Mammary epithelial cell (primary cell): ENCODE measurements at regions of chr7 and their contacts with region 1.

Region 1: GRCh38 chr7:41940760-41941343 is 238.0 kb upstream of the INHBA start:
- DNase-seq: peak; percentile 71
- H3K4me3 ChIP-seq: no peak overlapping the region
- H3K27ac ChIP-seq: no peak overlapping the region
- H3K4me1 ChIP-seq: peaks cover 5% of the 10 kb centered on the region
- H3K27me3 ChIP-seq: no peaks in the 10 kb centered on the region
- CTCF ChIP-seq: peak; percentile 71 to 77

Region 2: GRCh38 chr7:41977151-41977651 is 36.3 kb after region 1 on chr7:
- CTCF ChIA-PET with region 1: interaction called, 4 read pairs
- dilution Hi-C with region 1: no loop called
- in situ Hi-C with region 1: no loop called
- intact Hi-C with region 1: loop called (anchors 1 kb)
- DNase-seq: peak; percentile 41
- H3K4me3 ChIP-seq: no peak overlapping the region
- H3K27ac ChIP-seq: no peak overlapping the region
- H3K4me1 ChIP-seq: no peaks in the 10 kb centered on the region
- H3K27me3 ChIP-seq: no peaks in the 10 kb centered on the region
- CTCF ChIP-seq: peak; percentile 82 to 85

Region 3: GRCh38 chr7:42272793-42273665 is 332.2 kb after region 1 on chr7:
- CTCF ChIA-PET with region 1: interaction called, 3 read pairs
- dilution Hi-C with region 1: no loop called
- in situ Hi-C with region 1: no loop called
- intact Hi-C with region 1: loop called (anchors 1 kb)
- DNase-seq: peak; percentile 76
- H3K4me3 ChIP-seq: no peak overlapping the region
- H3K27ac ChIP-seq: peak overlapping the region; percentile 70
- H3K4me1 ChIP-seq: peaks cover 20% of the 10 kb centered on the region
- H3K27me3 ChIP-seq: no peaks in the 10 kb centered on the region
- CTCF ChIP-seq: peak; percentile 84 to 86

Region 4: DNA sequence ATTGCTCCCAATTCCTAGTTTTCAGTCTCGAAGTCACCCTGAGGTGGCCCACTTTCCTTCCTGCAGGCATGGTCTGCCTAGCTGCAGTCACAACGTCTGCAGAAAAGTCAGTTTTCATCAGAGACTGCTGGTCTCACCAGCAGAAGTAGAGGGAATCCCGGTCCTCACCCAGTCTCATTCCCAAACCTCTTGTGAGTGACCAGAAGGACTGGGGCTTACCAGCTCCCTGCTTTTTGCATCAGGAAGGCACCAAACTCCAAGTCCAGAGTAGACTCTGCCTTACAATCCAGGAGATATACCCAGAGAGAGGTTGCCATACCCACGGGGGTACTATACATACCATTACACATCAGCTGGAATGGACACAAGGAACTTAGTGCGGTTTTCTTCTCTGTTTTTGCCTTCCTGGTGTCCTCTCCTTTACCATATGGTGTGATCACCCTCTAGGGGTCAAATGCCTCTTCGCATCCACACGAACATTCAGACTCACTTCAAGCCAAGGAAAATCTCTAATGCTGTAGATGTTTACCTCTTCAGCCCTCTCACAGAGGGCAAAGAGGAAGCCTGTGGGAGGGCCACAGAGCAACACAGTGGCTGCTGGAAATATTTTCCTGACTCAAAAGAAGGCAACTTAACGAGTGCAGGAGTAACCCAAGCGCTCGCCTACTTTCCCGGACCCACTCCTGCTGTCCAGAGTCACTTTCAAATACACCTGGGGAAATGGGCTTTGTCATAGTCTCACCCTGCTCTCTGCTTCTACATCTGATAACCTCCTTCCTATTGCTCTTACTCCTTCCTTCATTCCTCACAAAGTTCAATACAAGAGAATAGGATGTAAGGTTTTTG is 750.2 kb after region 1 on chr7:
- CTCF ChIA-PET with region 1: interaction called, 5 read pairs
- dilution Hi-C with region 1: no loop called
- in situ Hi-C with region 1: loop called in 1 of 2 experiments (anchors 10 kb)
- intact Hi-C with region 1: loop called (anchors 1 kb)
- DNase-seq: peak; percentile 57
- H3K4me3 ChIP-seq: no peak overlapping the region
- H3K27ac ChIP-seq: no peak overlapping the region
- H3K4me1 ChIP-seq: no peaks in the 10 kb centered on the region
- H3K27me3 ChIP-seq: no peaks in the 10 kb centered on the region
- CTCF ChIP-seq: peak; percentile 83 to 84

Region 5: GRCh38 chr7:42843205-42843800 is 902.5 kb after region 1 on chr7:
- CTCF ChIA-PET with region 1: interaction called, 6 read pairs
- dilution Hi-C with region 1: no loop called
- in situ Hi-C with region 1: loop called in 1 of 2 experiments (anchors 10 kb)
- intact Hi-C with region 1: loop called (anchors 1 kb)
- DNase-seq: no peak
- H3K4me3 ChIP-seq: no peak overlapping the region
- H3K27ac ChIP-seq: no peak overlapping the region
- H3K4me1 ChIP-seq: no peaks in the 10 kb centered on the region
- H3K27me3 ChIP-seq: peaks cover 6% of the 10 kb centered on the region
- CTCF ChIP-seq: peak; percentile 37 to 66

Region 6: DNA sequence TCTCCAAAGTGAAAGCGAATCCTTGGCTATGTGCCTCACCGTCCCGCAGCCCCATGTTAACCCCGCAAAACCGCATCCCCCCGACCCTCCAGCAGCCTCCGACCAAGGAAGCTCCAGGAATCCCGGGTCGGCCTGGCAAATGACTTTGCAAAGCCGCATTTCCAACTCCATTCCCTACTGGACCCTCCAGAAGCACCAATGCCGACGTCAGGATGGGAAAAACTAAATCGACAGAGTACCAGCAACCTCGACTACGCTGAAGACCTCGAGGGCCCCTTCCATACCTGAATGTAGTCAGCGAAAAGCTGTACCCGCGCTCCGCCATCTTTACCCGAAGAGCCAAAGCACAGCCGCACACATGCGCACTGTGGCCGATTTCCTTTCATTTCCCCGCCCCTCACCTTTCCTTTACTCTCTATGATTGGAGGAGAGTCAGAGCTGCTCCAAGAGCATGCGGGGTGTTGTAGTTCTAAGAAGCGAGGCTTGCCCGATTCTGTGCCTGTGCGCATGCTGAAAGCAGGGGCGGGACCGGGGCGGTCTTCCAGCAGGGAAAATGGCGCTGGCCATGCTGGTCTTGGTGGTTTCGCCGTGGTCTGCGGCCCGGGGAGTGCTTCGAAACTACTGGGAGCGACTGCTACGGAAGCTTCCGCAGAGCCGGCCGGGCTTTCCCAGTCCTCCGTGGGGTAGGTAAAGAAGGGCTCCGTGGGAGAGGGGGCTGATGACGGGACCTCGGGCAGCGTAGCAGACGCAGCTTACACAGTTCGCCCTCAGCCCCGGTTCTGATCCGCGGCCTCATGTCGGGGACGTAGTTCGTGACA is 991.2 kb after region 1 on chr7 and contains the starts of genes MRPL32 and PSMA2:
- CTCF ChIA-PET with region 1: no interaction called
- dilution Hi-C with region 1: no loop called
- in situ Hi-C with region 1: no loop called
- intact Hi-C with region 1: loop called (anchors 2 kb)
- DNase-seq: peak; percentile 97
- H3K4me3 ChIP-seq: peak within 1 kb of the TSS; percentile 78 to 92 (median 88)
- H3K27ac ChIP-seq: peak within 1 kb of the TSS; percentile 91
- H3K4me1 ChIP-seq: peaks cover 29% of the 10 kb centered on the region
- H3K27me3 ChIP-seq: no peaks in the 10 kb centered on the region
- CTCF ChIP-seq: no peak
- total RNA-seq, gene MRPL32: 29.2 to 77.0 TPM
- total RNA-seq, gene PSMA2: 54.0 to 97.0 TPM

Region 7: DNA sequence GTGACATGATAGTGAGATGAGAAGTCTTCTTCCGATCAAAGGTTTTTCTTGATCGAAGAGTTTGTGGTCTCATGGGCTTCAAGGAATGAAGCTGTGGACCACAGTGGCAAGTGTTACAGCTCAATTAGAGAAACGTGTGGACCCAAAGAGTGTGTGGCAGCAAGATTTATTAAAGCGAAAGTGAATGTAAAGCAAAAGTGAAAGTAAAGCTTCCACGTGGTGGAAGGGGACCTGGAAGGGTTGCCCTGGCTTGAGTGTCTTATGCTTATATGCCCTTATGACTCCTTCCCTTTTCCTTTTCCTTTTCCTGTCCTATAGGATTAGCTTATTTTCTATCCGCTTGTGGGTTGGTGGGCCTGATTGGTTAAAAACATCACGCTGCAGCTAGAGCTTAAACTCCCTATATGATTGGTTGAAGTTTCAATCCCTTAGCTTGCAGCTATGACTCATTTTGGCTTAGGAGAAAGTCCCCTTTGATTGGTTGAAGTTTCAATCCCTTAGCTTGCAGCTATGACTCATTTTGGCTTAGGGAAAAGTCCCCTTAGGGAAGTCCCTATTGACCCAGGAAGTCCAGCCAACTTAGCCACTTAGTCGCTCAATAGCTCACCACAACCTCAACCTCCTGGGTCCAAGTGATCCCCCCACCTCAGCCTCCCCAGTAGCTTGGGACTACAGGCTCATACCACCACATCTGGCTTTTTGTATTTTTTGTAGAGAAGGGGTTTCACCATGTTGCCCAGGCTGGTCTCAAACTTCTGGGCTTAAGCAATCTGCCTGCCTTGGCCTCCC is 1893.8 kb after region 1 on chr7:
- CTCF ChIA-PET with region 1: no interaction called
- dilution Hi-C with region 1: no loop called
- in situ Hi-C with region 1: no loop called
- intact Hi-C with region 1: loop called (anchors 5 kb)
- DNase-seq: peak; percentile 66
- H3K4me3 ChIP-seq: no peak overlapping the region
- H3K27ac ChIP-seq: no peak overlapping the region
- H3K4me1 ChIP-seq: peaks cover 3% of the 10 kb centered on the region
- H3K27me3 ChIP-seq: no peaks in the 10 kb centered on the region
- CTCF ChIP-seq: no peak